GM12878 (cell line): ENCODE measurements at regions of chr7 and their contacts with region 1.

Region 1: DNA sequence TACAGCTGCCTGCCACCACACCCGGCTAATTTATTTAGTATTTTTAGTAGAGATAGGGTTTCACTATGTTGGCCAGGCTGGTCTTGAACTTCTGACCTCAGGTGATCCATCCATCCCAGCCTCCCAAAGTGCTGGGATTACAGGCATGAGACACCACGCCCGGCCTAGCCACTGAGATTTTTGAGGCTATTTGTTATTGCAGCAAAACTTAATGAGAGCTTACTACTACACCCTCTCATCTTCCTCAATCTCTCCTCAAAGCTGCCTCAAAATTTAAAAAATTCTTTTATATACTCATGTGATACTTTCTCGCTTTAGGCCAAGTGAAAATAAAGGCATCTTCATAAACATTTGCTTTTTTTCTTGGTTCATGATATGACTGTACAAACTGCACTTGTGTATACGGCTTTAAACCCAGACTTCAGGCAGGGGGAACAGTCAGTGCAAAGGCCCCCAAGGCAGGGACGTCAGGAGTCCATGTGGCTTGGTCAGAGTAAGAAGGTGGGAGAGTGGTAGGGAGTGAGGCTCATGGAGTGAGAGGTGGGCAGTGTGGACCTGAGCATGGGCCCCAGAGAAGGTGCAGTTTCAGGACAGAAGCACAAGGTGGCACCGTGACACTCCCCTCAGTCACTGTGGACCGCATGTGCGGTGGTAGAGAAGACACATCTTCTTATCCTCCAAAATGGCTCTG is 55.5 kb downstream of the SYPL1 start:
- DNase-seq: no peak
- ATAC-seq: peak; percentile 75
- H3K4me3 ChIP-seq: no peak overlapping the region
- H3K27ac ChIP-seq: peak overlapping the region; percentile 97
- H3K4me1 ChIP-seq: peaks cover 52% of the 10 kb centered on the region
- H3K27me3 ChIP-seq: no peaks in the 10 kb centered on the region
- CTCF ChIP-seq: peak; percentile 90 to 93 (median 92)
- EP300 ChIP-seq: no peak
- POLR2A ChIP-seq: no peak
- RAD21 ChIP-seq: peak; percentile 95

Region 2: GRCh38 chr7:106022193-106022821 is 34.4 kb before region 1 on chr7:
- CTCF ChIA-PET with region 1: no interaction called
- POLR2A ChIA-PET with region 1: no interaction called
- RAD21 ChIA-PET with region 1: no interaction called
- SMC1A ChIA-PET with region 1: no interaction called
- in situ Hi-C with region 1: no loop called
- intact Hi-C with region 1: no loop called
- DNase-seq: peak; percentile 74
- ATAC-seq: peak; percentile 72
- H3K4me3 ChIP-seq: no peak overlapping the region
- H3K27ac ChIP-seq: no peak overlapping the region
- H3K4me1 ChIP-seq: peaks cover 25% of the 10 kb centered on the region
- H3K27me3 ChIP-seq: no peaks in the 10 kb centered on the region; a peak in 1 of 4 replicates
- CTCF ChIP-seq: no peak
- EP300 ChIP-seq: no peak
- POLR2A ChIP-seq: no peak
- RAD21 ChIP-seq: no peak

Region 3: DNA sequence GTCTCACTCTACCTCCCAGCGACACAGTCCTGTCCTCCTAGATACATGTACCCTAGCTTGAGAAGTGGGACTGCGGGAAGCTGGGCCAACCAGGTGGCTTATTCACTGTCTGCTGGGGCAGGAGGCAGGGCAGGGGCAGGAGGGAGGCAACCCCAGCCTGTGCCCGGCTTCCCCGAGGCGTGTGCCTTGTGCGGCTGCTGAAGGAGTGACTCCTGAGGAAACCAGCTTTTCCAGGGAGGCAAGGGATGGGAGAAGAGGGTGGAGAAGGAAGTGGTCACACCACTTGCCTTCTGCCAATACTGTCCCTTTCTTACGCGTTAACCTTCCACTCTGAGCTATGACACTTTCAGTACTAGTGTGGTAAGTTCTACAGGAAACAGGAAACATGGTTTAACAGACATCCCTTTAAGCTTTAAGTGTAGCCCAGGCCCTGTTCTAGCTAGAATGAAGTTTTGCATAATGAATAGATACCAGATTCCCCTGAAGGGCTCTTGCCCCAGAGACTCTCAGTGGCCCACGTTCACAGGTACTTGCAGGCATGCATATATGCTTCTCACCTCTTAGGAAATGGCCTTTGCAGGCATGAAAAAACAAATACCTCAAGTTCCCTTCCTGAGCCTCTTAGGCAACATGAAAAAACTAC is 14.8 kb after region 1 on chr7:
- CTCF ChIA-PET with region 1: interaction called, 50 read pairs
- POLR2A ChIA-PET with region 1: interaction called, 47 read pairs
- RAD21 ChIA-PET with region 1: interaction called, 118 read pairs
- SMC1A ChIA-PET with region 1: interaction called, 164 read pairs
- in situ Hi-C with region 1: no loop called
- intact Hi-C with region 1: loop called (anchors 1 kb)
- DNase-seq: peak; percentile 98
- ATAC-seq: peak; percentile 89
- H3K4me3 ChIP-seq: peak overlapping the region; percentile 67
- H3K27ac ChIP-seq: peak overlapping the region; percentile 98
- H3K4me1 ChIP-seq: peaks cover 68% of the 10 kb centered on the region
- H3K27me3 ChIP-seq: no peaks in the 10 kb centered on the region
- CTCF ChIP-seq: no peak
- EP300 ChIP-seq: peak; percentile 71 to 78; a peak in 3 of 4 replicates
- POLR2A ChIP-seq: peak; percentile 79
- RAD21 ChIP-seq: peak; percentile 18; the same call in 1 of the 2 replicates

Region 4: DNA sequence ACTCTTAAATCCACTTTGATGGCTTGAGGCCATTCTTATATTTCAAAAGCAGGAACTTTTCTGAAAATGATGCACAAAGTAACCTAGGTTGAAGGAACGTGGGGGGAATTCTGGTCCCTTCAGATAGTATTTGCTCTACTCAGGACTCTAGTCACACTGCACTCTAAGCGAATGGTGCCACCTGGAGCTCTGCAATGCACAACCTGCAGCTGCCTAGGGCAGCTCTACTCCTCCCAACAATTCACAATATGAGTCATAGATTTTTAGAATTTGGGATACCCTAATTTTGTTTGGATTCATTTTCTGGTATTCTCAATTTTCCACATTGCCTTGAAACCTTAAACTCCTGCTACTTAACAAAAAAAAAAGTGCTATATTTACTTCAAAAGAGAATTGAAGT is 38.1 kb after region 1 on chr7:
- CTCF ChIA-PET with region 1: interaction called, 8 read pairs
- POLR2A ChIA-PET with region 1: no interaction called
- RAD21 ChIA-PET with region 1: interaction called, 10 read pairs
- SMC1A ChIA-PET with region 1: interaction called, 16 read pairs
- in situ Hi-C with region 1: no loop called
- intact Hi-C with region 1: no loop called
- DNase-seq: no peak
- ATAC-seq: peak; percentile 50
- H3K4me3 ChIP-seq: no peak overlapping the region
- H3K27ac ChIP-seq: no peak overlapping the region
- H3K4me1 ChIP-seq: peaks cover 20% of the 10 kb centered on the region
- H3K27me3 ChIP-seq: no peaks in the 10 kb centered on the region
- CTCF ChIP-seq: peak in 1 of 3 experiments; percentile 14; a peak in 1 of 6 replicates
- EP300 ChIP-seq: no peak
- POLR2A ChIP-seq: no peak
- RAD21 ChIP-seq: peak; percentile 28; the same call in 1 of the 2 replicates

Region 5: GRCh38 chr7:106112117-106112971 is 55.7 kb after region 1 on chr7 and contains the start of gene SYPL1:
- CTCF ChIA-PET with region 1: interaction called, 45 read pairs
- POLR2A ChIA-PET with region 1: interaction called, 33 read pairs
- RAD21 ChIA-PET with region 1: interaction called, 57 read pairs
- SMC1A ChIA-PET with region 1: interaction called, 46 read pairs
- in situ Hi-C with region 1: no loop called
- intact Hi-C with region 1: loop called (anchors 1 kb)
- DNase-seq: peak; percentile 66
- ATAC-seq: peak; percentile 88
- H3K4me3 ChIP-seq: peak within 1 kb of the TSS; percentile 83
- H3K27ac ChIP-seq: peak within 1 kb of the TSS; percentile 94
- H3K4me1 ChIP-seq: peaks cover 19% of the 10 kb centered on the region
- H3K27me3 ChIP-seq: no peaks in the 10 kb centered on the region
- CTCF ChIP-seq: peak in 2 of 3 experiments; percentile 5 to 7; a peak in 1 of 6 replicates
- EP300 ChIP-seq: 0 out of 4 replicates have a peak, but pooled peaks of 1 of the 2 experiments have one; percentile 29
- POLR2A ChIP-seq: peak; percentile 91
- RAD21 ChIP-seq: no peak
- polyA plus RNA-seq, gene SYPL1: 109 to 177 TPM

Region 6: DNA sequence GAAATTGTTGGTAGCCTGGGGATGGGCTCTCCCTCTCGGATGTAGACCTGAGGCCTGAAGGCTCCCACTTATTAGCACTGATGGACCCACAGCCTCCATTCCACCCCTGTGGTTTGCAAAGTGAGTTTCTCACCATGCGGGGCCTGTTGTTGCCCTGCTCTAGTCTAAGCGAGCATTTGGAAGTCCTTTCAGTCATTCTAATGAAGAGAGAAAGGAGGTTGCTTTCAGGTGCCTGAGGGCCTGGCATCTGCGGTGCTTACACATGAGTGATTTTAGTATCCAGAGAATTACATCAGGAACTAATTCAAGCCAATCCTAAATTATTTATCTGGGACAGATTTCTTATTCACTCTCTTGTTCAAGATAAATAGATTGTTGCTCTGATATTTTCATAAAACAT is 166.5 kb after region 1 on chr7:
- CTCF ChIA-PET with region 1: no interaction called
- POLR2A ChIA-PET with region 1: no interaction called
- RAD21 ChIA-PET with region 1: no interaction called
- SMC1A ChIA-PET with region 1: no interaction called
- in situ Hi-C with region 1: no loop called
- intact Hi-C with region 1: no loop called
- DNase-seq: no peak
- ATAC-seq: no peak
- H3K4me3 ChIP-seq: no peak overlapping the region
- H3K27ac ChIP-seq: no peak overlapping the region
- H3K4me1 ChIP-seq: no peaks in the 10 kb centered on the region
- H3K27me3 ChIP-seq: no peaks in the 10 kb centered on the region
- CTCF ChIP-seq: no peak
- EP300 ChIP-seq: no peak
- POLR2A ChIP-seq: no peak
- RAD21 ChIP-seq: no peak

Region 7: GRCh38 chr7:106285051-106285854 is 228.6 kb after region 1 on chr7:
- CTCF ChIA-PET with region 1: no interaction called
- POLR2A ChIA-PET with region 1: no interaction called
- RAD21 ChIA-PET with region 1: interaction called, 3 read pairs
- SMC1A ChIA-PET with region 1: interaction called, 3 read pairs
- in situ Hi-C with region 1: no loop called
- intact Hi-C with region 1: loop called (anchors 2 kb)
- DNase-seq: peak; percentile 97
- ATAC-seq: peak; percentile 77
- H3K4me3 ChIP-seq: peak overlapping the region; percentile 99
- H3K27ac ChIP-seq: peak overlapping the region; percentile 100
- H3K4me1 ChIP-seq: peaks cover 3% of the 10 kb centered on the region
- H3K27me3 ChIP-seq: no peaks in the 10 kb centered on the region
- CTCF ChIP-seq: no peak
- EP300 ChIP-seq: peak; percentile 42 to 52; a peak in 2 of 4 replicates
- POLR2A ChIP-seq: peak; percentile 78
- RAD21 ChIP-seq: no peak